Endothelial cell of umbilical vein (primary cell): ENCODE measurements at regions of chr16 and their contacts with region 1.

Region 1: GRCh38 chr16:67883872-67884261 is 818 bp upstream of the NRN1L start:
- DNase-seq: peak; percentile 48
- H3K4me3 ChIP-seq: no peak overlapping the region
- H3K27ac ChIP-seq: no peak overlapping the region
- H3K4me1 ChIP-seq: no peaks in the 10 kb centered on the region
- H3K27me3 ChIP-seq: no peaks in the 10 kb centered on the region
- CTCF ChIP-seq: peak; percentile 81 to 94
- POLR2A ChIP-seq: no peak

Region 2: GRCh38 chr16:67456391-67457081 is 427.3 kb before region 1 on chr16:
- CTCF ChIA-PET with region 1: no interaction called
- POLR2A ChIA-PET with region 1: no interaction called
- dilution Hi-C with region 1: no loop called
- intact Hi-C with region 1: no loop called
- DNase-seq: no peak
- H3K4me3 ChIP-seq: no peak overlapping the region
- H3K27ac ChIP-seq: no peak overlapping the region
- H3K4me1 ChIP-seq: peaks cover 13% of the 10 kb centered on the region
- H3K27me3 ChIP-seq: no peaks in the 10 kb centered on the region
- CTCF ChIP-seq: peak; percentile 17 to 34
- POLR2A ChIP-seq: no peak

Region 3: DNA sequence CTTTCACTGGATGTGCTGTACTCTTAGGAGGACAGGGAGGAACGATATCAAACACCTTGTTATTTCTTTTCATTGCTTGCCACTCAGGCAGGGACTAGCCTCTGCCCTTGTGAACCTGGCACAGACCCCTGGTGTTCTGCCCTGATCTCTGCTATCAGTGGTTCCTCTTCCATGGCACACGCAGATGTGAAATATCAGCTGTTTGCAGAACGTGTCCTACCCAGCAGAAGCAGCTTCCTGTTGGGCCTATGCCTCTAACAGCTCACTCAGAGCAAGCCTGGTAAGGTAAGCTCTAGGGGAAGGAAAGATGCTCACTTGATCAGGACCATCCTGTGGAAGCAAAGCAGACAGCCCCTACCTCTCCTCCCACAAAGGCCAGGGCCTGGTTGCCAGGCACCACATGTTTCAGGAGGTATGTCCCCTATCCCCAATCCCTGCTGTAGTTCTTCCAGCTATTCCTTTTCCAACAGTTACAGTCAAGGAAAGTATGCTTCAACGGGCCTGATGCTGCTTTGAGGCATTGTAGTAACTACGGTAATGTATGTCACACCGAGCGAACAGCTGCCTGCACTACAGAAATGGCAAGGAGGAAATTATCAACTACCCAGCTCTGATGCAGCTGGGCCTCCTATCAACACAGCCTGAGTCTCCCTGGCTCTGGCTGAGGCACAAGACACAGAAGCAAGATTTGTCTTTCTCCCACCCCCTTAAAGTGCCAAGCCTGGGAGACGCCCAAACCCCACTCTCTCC is 123.5 kb before region 1 on chr16:
- CTCF ChIA-PET with region 1: no interaction called
- POLR2A ChIA-PET with region 1: no interaction called
- dilution Hi-C with region 1: no loop called
- intact Hi-C with region 1: no loop called
- DNase-seq: no peak
- H3K4me3 ChIP-seq: no peak overlapping the region
- H3K27ac ChIP-seq: no peak overlapping the region
- H3K4me1 ChIP-seq: peaks cover 4% of the 10 kb centered on the region
- H3K27me3 ChIP-seq: no peaks in the 10 kb centered on the region
- CTCF ChIP-seq: no peak
- POLR2A ChIP-seq: no peak

Region 4: DNA sequence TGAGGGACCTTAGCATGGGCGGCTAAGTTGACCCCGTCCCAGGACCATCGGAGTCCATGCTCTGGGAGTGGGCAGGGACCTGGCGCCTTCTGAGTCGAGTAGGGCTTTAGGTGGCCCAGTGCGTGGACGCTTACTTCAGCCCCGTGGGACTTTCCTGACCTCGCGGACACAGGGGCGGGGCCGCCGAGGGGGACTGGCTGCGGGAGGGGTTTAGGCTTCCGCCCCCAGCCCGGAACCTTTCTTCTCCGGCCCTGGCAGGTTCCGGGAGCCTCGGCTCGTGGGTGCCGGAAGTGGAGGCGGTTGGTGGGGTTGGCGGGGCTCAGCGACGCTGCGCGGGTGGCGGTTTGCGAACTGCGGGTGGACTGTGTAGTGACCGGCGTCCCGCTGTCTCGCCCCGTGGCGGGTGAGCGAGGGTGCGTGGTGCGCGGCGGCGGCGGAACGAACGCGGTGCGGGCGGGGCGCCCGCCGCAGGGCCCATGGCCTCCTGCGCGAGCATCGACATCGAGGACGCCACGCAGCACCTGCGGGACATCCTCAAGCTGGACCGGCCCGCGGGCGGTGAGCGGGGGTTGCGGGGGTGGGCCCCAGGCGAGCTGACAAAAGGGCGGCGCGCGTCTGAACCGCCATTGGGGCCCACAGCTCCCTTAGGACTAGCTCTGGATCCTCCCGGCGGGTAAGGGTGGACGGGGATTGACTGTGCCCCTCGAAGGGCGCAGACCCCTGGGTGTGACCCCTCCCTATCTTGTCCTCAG is 10.9 kb before region 1 on chr16 and contains the start of gene EDC4:
- CTCF ChIA-PET with region 1: interaction called, 18 read pairs
- POLR2A ChIA-PET with region 1: no interaction called
- dilution Hi-C with region 1: no loop called
- intact Hi-C with region 1: no loop called
- DNase-seq: peak; percentile 78
- H3K4me3 ChIP-seq: peak within 1 kb of the TSS; percentile 66 to 79 (median 67)
- H3K27ac ChIP-seq: peak within 1 kb of the TSS; percentile 40
- H3K4me1 ChIP-seq: peaks cover 15% of the 10 kb centered on the region
- H3K27me3 ChIP-seq: no peaks in the 10 kb centered on the region
- CTCF ChIP-seq: no peak
- POLR2A ChIP-seq: peak; percentile 91
- total RNA-seq, gene EDC4: 68.0 and 81.2 TPM in 2 replicates

Region 5: GRCh38 chr16:67902831-67903230 is 19.0 kb after region 1 on chr16:
- CTCF ChIA-PET with region 1: interaction called, 17 read pairs
- POLR2A ChIA-PET with region 1: no interaction called
- dilution Hi-C with region 1: no loop called
- intact Hi-C with region 1: no loop called
- DNase-seq: peak; percentile 88
- H3K4me3 ChIP-seq: no peak overlapping the region
- H3K27ac ChIP-seq: peak overlapping the region; percentile 67
- H3K4me1 ChIP-seq: peaks cover 10% of the 10 kb centered on the region
- H3K27me3 ChIP-seq: no peaks in the 10 kb centered on the region
- CTCF ChIP-seq: no peak
- POLR2A ChIP-seq: no peak

Region 6: DNA sequence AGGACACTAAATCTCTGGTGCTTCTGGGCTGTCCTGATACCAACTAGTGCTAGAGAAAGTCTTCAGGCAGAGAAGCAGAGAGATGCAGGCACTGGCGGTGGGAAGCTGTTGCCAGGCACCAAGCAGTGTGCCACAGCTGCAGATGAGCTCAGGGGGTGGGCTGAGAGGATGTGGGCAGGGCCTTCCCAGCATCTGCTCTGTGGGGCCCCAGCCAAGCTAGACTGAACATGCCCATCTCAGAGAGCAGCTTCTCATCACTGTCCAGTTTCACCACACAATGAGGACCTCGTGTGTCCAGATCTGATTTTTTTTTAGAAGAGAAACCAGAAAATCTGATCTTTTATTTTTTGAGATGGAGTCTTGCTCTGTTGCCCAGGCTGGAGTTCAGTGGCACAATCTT is 26.3 kb after region 1 on chr16:
- CTCF ChIA-PET with region 1: interaction called, 18 read pairs
- POLR2A ChIA-PET with region 1: no interaction called
- dilution Hi-C with region 1: no loop called
- intact Hi-C with region 1: no loop called
- DNase-seq: no peak
- H3K4me3 ChIP-seq: no peak overlapping the region
- H3K27ac ChIP-seq: no peak overlapping the region
- H3K4me1 ChIP-seq: no peaks in the 10 kb centered on the region
- H3K27me3 ChIP-seq: no peaks in the 10 kb centered on the region
- CTCF ChIP-seq: no peak
- POLR2A ChIP-seq: no peak

Region 7: GRCh38 chr16:67928561-67929364 is 44.9 kb after region 1 on chr16:
- CTCF ChIA-PET with region 1: interaction called, 106 read pairs
- POLR2A ChIA-PET with region 1: no interaction called
- dilution Hi-C with region 1: no loop called
- intact Hi-C with region 1: loop called (anchors 1 kb)
- DNase-seq: peak; percentile 50
- H3K4me3 ChIP-seq: no peak overlapping the region
- H3K27ac ChIP-seq: no peak overlapping the region
- H3K4me1 ChIP-seq: peaks cover 10% of the 10 kb centered on the region
- H3K27me3 ChIP-seq: no peaks in the 10 kb centered on the region
- CTCF ChIP-seq: peak; percentile 87 to 93
- POLR2A ChIP-seq: no peak

Region 8: DNA sequence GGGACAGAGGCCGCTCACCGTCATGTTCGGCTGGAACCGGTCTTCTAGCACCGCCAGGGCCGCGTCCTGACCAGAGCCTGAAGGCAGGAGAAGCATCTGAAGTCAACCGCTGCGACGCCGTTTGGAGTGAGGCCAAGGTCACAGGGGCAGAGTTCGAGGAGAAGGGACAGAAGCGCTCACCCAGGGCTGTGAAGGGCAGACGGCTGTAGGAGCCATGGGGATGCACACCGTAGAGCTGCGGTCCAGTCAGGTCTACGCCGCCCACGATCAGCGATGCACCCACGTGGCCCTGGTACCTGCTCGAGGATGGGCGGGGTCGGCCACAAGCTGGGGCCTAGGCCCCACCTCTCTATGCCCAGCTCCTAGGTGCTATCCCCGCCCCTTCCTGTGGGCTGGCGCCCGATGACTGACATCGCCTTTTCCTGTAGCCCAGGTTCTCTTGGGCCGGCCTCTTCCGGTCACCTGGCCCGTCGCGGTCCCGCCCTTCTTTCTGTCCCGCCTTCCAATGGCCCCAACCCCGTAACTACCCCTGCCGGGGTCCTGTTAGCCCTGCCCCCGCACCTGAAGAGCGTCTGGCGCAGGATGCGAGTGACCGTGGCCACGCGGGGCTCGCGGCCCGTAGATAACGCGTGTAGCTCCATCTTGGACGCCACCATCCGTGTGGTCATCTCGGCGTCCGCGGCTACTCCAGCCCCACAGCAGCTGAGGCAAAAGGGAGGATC is 51.7 kb after region 1 on chr16:
- CTCF ChIA-PET with region 1: interaction called, 42 read pairs
- POLR2A ChIA-PET with region 1: no interaction called
- dilution Hi-C with region 1: no loop called
- intact Hi-C with region 1: no loop called
- DNase-seq: peak; percentile 91
- H3K4me3 ChIP-seq: peak overlapping the region; percentile 31 to 88 (median 58)
- H3K27ac ChIP-seq: peak overlapping the region; percentile 36
- H3K4me1 ChIP-seq: peaks cover 13% of the 10 kb centered on the region
- H3K27me3 ChIP-seq: no peaks in the 10 kb centered on the region
- CTCF ChIP-seq: no peak
- POLR2A ChIP-seq: peak; percentile 71

Region 9: DNA sequence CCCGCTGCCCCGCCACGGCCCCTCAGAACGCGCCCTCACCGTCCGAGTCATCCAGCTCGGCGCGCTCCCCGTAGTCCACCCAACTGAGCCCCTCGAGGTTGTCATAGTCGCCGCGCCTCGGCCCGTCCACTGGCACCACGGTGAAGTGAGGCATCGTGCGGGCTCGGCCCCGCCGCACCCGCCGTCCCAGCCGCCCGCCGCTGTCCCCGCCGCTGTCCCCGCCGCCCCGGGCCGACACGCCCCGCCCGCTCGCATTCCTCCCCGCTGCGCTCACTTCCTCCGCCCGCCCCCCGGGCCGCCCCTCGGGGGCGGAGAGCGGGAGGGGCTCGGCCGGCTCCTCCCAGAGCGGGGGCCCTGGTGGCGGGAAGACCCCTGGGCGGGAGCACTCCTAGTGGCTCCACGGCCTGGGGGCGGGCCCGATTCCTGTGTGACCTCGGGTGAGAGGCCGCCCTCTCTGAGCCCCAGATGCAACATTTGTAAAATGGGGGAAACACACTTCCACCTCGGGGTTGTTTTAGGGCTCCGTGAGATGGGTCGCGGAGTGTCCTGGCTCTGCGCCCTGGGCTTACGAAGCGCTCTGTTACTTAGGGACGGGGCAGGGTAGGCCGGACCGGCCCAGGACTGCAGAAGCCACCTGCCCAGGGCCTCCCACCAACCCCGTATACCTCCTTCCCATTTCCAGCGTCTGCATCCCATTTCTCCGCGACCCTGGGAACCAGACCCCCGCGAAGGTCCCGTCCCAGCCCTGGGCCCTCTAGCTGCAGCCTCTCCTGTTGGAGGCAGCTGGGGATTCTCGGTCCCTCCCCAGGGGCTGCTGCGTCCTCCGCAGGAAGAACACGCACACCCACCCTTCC is 84.8 kb after region 1 on chr16 and contains the start of gene SLC12A4:
- CTCF ChIA-PET with region 1: no interaction called
- POLR2A ChIA-PET with region 1: no interaction called
- dilution Hi-C with region 1: no loop called
- intact Hi-C with region 1: no loop called
- DNase-seq: peak; percentile 78
- H3K4me3 ChIP-seq: peak within 1 kb of the TSS; percentile 92 to 97 (median 96)
- H3K27ac ChIP-seq: peak within 1 kb of the TSS; percentile 70
- H3K4me1 ChIP-seq: peaks cover 22% of the 10 kb centered on the region
- H3K27me3 ChIP-seq: no peaks in the 10 kb centered on the region
- CTCF ChIP-seq: no peak
- POLR2A ChIP-seq: peak; percentile 86
- total RNA-seq, gene SLC12A4: 99.0 and 114 TPM in 2 replicates

Region 10: DNA sequence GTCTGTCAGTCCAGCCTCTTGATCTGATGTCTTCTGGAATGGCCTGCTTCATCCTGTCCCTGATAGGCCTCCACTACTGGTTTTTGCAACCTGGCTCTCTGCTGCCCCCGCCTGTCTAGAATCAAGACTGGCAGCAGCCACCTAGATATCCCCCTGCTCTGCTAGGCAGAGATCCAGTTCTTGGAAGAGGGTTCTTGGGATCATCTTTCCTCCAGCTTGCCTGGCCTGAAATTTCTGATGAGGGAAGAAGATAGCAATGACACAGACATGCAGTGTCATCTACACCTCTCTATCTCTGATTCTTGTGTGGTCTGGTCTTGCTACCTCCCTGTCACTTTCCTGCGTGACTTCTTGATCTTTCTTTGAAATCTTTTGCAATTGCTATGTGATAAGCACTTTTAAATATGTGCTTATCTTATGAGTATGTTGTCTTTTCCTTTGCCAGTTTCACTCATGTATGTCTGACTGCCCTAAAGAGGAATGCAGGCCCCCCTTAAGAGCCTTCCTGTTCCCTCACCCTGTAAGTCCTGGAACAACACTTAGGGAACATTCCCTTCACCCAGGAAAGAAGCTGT is 181.0 kb after region 1 on chr16:
- CTCF ChIA-PET with region 1: interaction called, 6 read pairs
- POLR2A ChIA-PET with region 1: no interaction called
- dilution Hi-C with region 1: no loop called
- intact Hi-C with region 1: loop called (anchors 5 kb)
- DNase-seq: peak; percentile 77
- H3K4me3 ChIP-seq: no peak overlapping the region
- H3K27ac ChIP-seq: no peak overlapping the region
- H3K4me1 ChIP-seq: peaks cover 19% of the 10 kb centered on the region
- H3K27me3 ChIP-seq: no peaks in the 10 kb centered on the region
- CTCF ChIP-seq: peak; percentile 80 to 83
- POLR2A ChIP-seq: no peak